Sigmoid colon (tissue), 7 donors: ENCODE measurements at regions of chr11 and their contacts with region 1.

Region 1: DNA sequence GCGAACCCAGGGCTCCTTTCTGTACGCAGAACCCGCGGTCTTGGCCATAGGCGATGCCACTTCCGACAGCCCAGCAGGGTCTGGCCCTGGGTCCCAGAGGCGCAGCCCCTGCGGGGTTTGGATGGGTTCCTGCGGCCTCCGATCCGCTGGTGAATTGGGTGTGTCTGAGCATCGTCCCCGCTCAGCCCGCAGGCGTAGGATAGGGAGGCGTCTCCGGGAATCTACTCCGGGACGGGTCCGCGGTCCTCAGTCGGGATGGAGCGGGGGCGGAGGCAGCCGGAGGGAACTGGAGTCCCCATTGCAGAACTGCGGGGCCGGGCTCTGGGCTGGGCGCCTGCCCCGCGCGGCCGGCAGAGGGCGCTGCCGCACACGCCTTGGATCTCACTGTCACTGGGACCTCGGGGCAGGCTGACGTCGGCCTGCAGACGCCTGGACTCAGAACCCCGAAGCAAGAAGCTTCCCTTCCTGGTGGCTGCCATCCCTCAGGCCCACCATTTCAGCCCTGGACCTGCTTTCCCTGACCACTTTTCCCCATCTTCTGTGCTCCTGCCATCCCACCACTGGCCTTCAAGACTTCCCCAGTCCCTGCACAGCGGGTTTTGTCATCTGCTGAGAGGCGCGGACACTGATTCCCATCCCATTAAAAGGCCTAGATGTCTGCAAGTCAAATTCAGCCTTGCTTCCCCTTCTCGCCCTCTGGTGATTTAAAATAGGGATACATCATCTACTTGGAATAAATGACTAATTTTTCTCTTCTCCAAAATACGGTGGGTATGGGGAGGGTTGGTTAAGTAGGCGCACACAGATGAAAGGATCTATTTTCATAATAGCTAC is 38.3 kb upstream of the CREB3L1 start:
- DNase-seq: peak; percentile 94
- H3K4me3 ChIP-seq: peak overlapping the region; percentile 11 to 57 (median 50)
- H3K27ac ChIP-seq: peak overlapping the region; percentile 78 to 87 (median 84)
- H3K4me1 ChIP-seq: peaks cover 0 to 37% (median 34%) of the 10 kb centered on the region in 4 donors
- H3K27me3 ChIP-seq: no peaks in the 10 kb centered on the region
- CTCF ChIP-seq: peak; percentile 97 to 99 (median 98)
- EP300 ChIP-seq: no peak
- POLR2A ChIP-seq: no peak

Region 2: GRCh38 chr11:45964911-45965389 is 274.2 kb before region 1 on chr11:
- intact Hi-C with region 1: loop called (anchors 10 kb)
- DNase-seq: peak; percentile 82
- H3K4me3 ChIP-seq: no peak overlapping the region
- H3K27ac ChIP-seq: peak overlapping the region in 3 of 4 donors; percentile 24 to 47 (median 31)
- H3K4me1 ChIP-seq: peaks cover 0 to 7% (median 3%) of the 10 kb centered on the region in 4 donors
- H3K27me3 ChIP-seq: no peaks in the 10 kb centered on the region
- CTCF ChIP-seq: peak; percentile 80 to 91 (median 84)
- EP300 ChIP-seq: no peak
- POLR2A ChIP-seq: no peak

Region 3: GRCh38 chr11:46272816-46273427 is 33.7 kb after region 1 on chr11:
- intact Hi-C with region 1: loop called (anchors 2 kb)
- DNase-seq: peak; percentile 85
- H3K4me3 ChIP-seq: no peak overlapping the region
- H3K27ac ChIP-seq: peak overlapping the region; percentile 68 to 86 (median 84)
- H3K4me1 ChIP-seq: peaks cover 0 to 68% (median 65%) of the 10 kb centered on the region in 4 donors
- H3K27me3 ChIP-seq: peaks cover 0 to 16% (median 0%) of the 10 kb centered on the region in 3 donors
- CTCF ChIP-seq: no peak
- EP300 ChIP-seq: no peak
- POLR2A ChIP-seq: no peak

Region 4: GRCh38 chr11:46308631-46309419 is 69.6 kb after region 1 on chr11:
- intact Hi-C with region 1: loop called (anchors 1 kb)
- DNase-seq: peak; percentile 91
- H3K4me3 ChIP-seq: no peak overlapping the region
- H3K27ac ChIP-seq: no peak overlapping the region
- H3K4me1 ChIP-seq: peaks cover 0 to 6% (median 1%) of the 10 kb centered on the region in 4 donors
- H3K27me3 ChIP-seq: no peaks in the 10 kb centered on the region
- CTCF ChIP-seq: peak; percentile 86 to 93 (median 90)
- EP300 ChIP-seq: no peak
- POLR2A ChIP-seq: no peak

Region 5: DNA sequence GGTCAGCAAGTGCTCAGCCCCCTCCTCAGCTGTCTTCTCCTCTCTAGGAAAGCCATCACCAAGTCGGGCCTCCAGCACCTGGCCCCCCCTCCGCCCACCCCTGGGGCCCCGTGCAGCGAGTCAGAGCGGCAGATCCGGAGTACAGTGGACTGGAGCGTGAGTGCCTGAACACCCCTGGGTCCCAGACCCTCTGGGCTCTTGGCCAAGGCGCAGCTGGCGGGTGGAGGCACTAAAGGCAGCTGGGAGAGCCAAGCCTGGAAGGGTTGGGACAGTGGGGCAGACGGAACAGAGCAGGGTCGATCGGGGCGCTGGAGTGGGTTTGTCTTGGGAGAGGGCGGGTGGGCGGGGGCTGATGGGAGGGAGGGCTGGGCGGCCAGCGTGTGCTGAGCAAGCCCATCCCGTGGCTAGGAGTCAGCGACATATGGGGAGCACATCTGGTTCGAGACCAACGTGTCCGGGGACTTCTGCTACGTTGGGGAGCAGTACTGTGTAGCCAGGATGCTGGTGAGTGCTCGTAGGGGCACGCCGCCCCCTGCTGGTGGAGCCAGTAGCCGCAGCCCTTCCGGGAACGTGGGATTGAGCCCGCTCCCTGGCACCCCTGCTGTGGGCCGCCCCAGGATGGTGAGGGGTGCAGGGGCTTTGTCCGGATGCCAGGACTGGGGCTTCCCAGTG is 128.2 kb after region 1 on chr11:
- intact Hi-C with region 1: loop called (anchors 5 kb)
- DNase-seq: peak; percentile 86
- H3K4me3 ChIP-seq: no peak overlapping the region
- H3K27ac ChIP-seq: peak overlapping the region in 1 of 4 donors; percentile 25
- H3K4me1 ChIP-seq: peaks cover 0 to 30% (median 25%) of the 10 kb centered on the region in 4 donors
- H3K27me3 ChIP-seq: no peaks in the 10 kb centered on the region
- CTCF ChIP-seq: peak; percentile 67 to 92 (median 88)
- EP300 ChIP-seq: no peak
- POLR2A ChIP-seq: no peak